Activated CD4-positive, alpha-beta memory T cell treated with anti-CD3 and anti-CD28 coated beads, Interleukin-2, amount 10 ng/mL, durations not matched to agents 7 days and 5 days (primary cell): ENCODE measurements at regions of chr10 and their contacts with region 1.

Region 1: GRCh38 chr10:35339942-35340341 is 3.6 kb downstream of the CCNY start:
- DNase-seq: no peak
- H3K4me3 Mint-ChIP-seq: no peak overlapping the region
- H3K27ac Mint-ChIP-seq: peak overlapping the region; percentile 55
- H3K4me1 Mint-ChIP-seq: peaks cover 66% of the 10 kb centered on the region
- H3K27me3 Mint-ChIP-seq: no peaks in the 10 kb centered on the region

Region 2: GRCh38 chr10:35289198-35289597 is 50.7 kb before region 1 on chr10:
- CTCF ChIA-PET with region 1: no interaction called
- POLR2A ChIA-PET with region 1: no interaction called
- DNase-seq: no peak
- H3K4me3 Mint-ChIP-seq: no peak overlapping the region
- H3K27ac Mint-ChIP-seq: no peak overlapping the region
- H3K4me1 Mint-ChIP-seq: no peaks in the 10 kb centered on the region
- H3K27me3 Mint-ChIP-seq: no peaks in the 10 kb centered on the region

Region 3: DNA sequence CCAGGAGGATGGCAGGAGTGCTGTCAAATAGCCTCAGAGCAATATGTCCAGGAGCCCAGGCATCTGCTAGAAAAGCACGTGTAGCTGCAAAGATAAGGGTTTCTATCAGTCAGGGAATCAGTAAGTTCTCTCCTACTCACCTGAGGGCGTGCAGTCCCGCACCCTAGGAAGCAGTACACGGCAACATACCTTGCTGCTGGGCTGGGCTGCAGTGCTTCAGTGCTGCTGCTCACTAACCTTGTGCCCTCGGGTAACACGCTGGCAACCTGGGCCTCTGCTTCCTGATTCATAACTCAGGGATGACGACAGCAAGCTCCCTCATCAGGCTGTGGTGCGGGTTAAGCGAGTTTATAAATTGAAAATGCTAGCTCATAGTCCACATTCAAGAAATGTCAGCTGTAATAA is 33.1 kb before region 1 on chr10:
- CTCF ChIA-PET with region 1: no interaction called
- POLR2A ChIA-PET with region 1: no interaction called
- DNase-seq: no peak
- H3K4me3 Mint-ChIP-seq: no peak overlapping the region
- H3K27ac Mint-ChIP-seq: no peak overlapping the region
- H3K4me1 Mint-ChIP-seq: no peaks in the 10 kb centered on the region
- H3K27me3 Mint-ChIP-seq: peaks cover 16% of the 10 kb centered on the region

Region 4: GRCh38 chr10:35351021-35351420 is 11.1 kb after region 1 on chr10:
- CTCF ChIA-PET with region 1: interaction called, 26 read pairs
- POLR2A ChIA-PET with region 1: interaction called, 11 read pairs
- DNase-seq: no peak
- H3K4me3 Mint-ChIP-seq: no peak overlapping the region
- H3K27ac Mint-ChIP-seq: no peak overlapping the region
- H3K4me1 Mint-ChIP-seq: peaks cover 51% of the 10 kb centered on the region
- H3K27me3 Mint-ChIP-seq: no peaks in the 10 kb centered on the region

Region 5: DNA sequence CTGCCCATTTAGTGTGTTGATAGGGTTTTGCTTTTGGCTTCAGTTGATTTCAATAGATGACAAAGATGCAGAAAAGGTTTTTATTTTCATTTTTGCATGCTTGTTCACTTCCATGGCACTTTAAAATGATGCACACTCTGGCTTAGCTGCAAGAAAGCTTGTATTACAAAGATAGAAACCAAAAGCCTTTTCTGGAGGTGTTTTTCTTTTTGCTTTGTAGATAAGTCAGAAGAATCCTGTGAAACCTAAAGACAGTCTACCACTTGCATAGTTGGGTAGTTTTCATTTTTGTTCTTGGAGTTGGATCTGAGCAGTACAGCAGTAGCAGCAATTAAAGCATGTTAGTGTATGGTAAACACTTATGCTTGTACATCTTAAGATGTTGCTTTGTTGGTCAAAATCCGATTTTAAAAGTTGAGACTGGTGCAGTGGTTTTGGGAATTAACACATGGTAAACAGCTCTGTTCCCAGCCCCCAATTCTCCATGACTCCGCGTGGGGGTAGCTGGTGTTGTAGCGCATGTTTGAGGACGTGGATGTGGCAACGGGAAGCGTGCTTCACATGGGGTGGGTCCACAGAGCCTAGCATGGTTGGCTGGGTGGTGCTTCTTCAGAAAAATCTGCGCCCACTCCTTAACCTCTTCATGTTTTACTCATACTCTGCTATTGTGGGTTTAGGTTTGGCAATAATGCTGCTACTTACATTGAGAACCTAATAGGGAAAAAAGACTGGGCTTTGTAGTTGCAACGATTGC is 16.2 kb after region 1 on chr10:
- CTCF ChIA-PET with region 1: interaction called, 26 read pairs
- POLR2A ChIA-PET with region 1: interaction called, 11 read pairs
- DNase-seq: peak; percentile 28
- H3K4me3 Mint-ChIP-seq: peak overlapping the region; percentile 44
- H3K27ac Mint-ChIP-seq: peak overlapping the region; percentile 74
- H3K4me1 Mint-ChIP-seq: peaks cover 57% of the 10 kb centered on the region
- H3K27me3 Mint-ChIP-seq: no peaks in the 10 kb centered on the region